HCT116 (cell line): ENCODE measurements at regions of chr4 and their contacts with region 1.

Region 1: DNA sequence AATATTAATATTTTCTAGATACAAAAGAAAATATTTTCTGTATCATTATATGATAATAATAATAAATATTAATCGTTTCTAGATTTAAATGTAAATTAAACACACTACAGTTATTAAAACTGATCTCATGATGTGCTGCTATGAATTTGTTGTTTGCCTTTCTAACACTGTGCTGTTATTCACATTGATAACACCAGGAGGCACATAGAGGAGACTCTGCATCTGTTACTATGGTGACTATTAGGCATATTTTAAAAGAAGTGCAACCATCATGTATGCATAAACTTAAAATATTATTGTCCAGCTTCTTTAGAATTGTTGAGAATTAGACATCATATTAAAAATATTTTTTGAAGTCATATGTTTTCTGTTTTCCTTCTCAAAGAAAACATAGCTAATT is 11.8 kb upstream of the PDGFC start:
- DNase-seq: no peak
- ATAC-seq: peak; percentile 59; the same call in 1 of the 2 replicates
- H3K4me3 ChIP-seq: no peak overlapping the region
- H3K27ac ChIP-seq: no peak overlapping the region
- H3K4me1 ChIP-seq: no peaks in the 10 kb centered on the region
- H3K27me3 ChIP-seq: no peaks in the 10 kb centered on the region
- CTCF ChIP-seq: peak; percentile 41 to 54 (median 51); a peak in 5 of 6 replicates
- POLR2A ChIP-seq: no peak
- RAD21 ChIP-seq: peak; percentile 49

Region 2: GRCh38 chr4:157035471-157035870 is 52.1 kb after region 1 on chr4:
- CTCF ChIA-PET with region 1: no interaction called
- POLR2A ChIA-PET with region 1: no interaction called
- RAD21 ChIA-PET with region 1: no interaction called
- intact Hi-C with region 1: no loop called
- DNase-seq: no peak
- ATAC-seq: no peak
- H3K4me3 ChIP-seq: no peak overlapping the region
- H3K27ac ChIP-seq: no peak overlapping the region
- H3K4me1 ChIP-seq: no peaks in the 10 kb centered on the region
- H3K27me3 ChIP-seq: no peaks in the 10 kb centered on the region
- CTCF ChIP-seq: no peak
- POLR2A ChIP-seq: no peak
- RAD21 ChIP-seq: no peak

Region 3: DNA sequence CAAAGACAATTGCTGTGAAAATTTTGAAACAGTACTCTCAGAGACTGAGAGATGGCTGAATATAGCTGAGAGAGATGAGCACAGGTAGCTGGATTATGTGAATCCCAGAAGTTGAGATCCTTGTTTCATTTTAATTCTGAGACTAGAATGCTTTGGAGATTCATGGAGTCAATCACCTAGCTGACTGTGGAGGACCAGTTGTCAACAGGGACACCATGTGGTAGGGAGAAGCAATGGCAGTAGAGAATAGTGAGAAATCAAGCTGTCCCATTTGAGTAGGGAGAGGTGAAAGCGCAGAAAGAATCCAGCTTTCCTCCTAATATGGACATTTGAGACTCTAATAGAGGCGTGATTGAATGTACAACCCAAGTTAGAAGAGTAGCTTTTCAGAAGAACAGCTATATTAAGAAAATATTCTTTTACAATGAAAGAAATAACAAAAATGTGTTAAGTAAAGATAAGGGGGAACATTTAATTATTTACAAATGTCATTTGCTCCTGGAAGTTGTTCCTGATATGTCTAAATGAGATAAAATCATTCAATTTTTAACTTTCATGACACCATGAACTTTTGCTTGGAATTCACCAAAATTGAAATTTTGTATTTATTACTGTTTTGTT is 62.3 kb after region 1 on chr4:
- CTCF ChIA-PET with region 1: interaction called, 13 read pairs
- POLR2A ChIA-PET with region 1: no interaction called
- RAD21 ChIA-PET with region 1: no interaction called
- intact Hi-C with region 1: loop called (anchors 2 kb)
- DNase-seq: peak; percentile 46
- ATAC-seq: peak; percentile 95
- H3K4me3 ChIP-seq: no peak overlapping the region
- H3K27ac ChIP-seq: no peak overlapping the region
- H3K4me1 ChIP-seq: no peaks in the 10 kb centered on the region
- H3K27me3 ChIP-seq: no peaks in the 10 kb centered on the region
- CTCF ChIP-seq: peak; percentile 67 to 79 (median 70)
- POLR2A ChIP-seq: no peak
- RAD21 ChIP-seq: peak; percentile 82

Region 4: GRCh38 chr4:157128395-157128794 is 145.0 kb after region 1 on chr4:
- CTCF ChIA-PET with region 1: no interaction called
- POLR2A ChIA-PET with region 1: no interaction called
- RAD21 ChIA-PET with region 1: no interaction called
- intact Hi-C with region 1: loop called (anchors 2 kb)
- DNase-seq: peak; percentile 15
- ATAC-seq: peak; percentile 85
- H3K4me3 ChIP-seq: no peak overlapping the region
- H3K27ac ChIP-seq: no peak overlapping the region
- H3K4me1 ChIP-seq: no peaks in the 10 kb centered on the region
- H3K27me3 ChIP-seq: no peaks in the 10 kb centered on the region
- CTCF ChIP-seq: peak; percentile 31 to 51 (median 44); a peak in 5 of 6 replicates
- POLR2A ChIP-seq: no peak
- RAD21 ChIP-seq: peak; percentile 77